ENCODE measurements at regions of chr10 and their contacts with region 1.

Region 1: DNA sequence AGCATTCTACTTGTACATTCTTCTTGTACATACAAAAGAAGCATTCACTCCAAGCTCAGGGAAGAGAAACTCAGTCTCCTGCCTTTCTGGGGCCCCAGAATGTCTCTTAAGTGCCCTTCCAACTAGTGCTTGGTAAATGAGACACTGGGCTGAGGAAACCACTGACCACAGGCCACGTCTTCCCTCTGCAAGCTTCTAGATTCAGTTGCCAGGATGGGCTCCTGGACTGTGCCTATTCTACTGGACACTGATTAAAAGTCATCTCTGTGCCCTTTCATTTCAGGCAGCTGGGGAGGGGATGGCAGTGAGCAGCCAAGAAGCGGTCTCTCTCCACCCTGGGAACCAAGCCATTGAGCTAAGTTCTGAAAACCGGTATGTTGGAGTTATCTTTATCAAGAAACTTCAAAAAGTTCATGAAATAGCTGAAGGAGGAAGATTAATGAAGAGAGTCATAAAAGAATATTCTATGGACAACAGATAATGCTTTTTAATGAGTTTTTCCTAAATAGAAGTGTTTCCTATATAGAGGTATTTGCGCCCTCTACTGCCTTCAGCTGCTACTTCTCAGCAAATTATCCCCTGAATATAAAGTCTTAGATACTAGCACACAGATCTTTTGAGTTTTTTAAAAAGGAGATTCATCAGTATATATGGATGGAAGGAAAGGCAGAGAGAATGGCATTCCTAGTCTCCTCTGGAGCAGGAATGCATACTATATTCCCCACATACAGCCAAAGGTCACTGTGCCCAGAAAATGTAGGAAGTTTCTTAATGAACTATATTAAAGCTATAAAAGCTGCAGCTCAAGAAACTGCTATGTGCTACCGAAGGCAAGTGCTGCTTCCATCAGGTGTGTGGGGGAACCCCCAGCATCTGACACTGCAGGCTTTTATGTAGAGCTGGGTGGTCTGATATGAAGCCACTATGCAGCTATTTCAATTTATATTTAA is 8.4 kb upstream of the IFIT1B start:
- DNase-seq: no peak
- ATAC-seq: no peak

Region 2: DNA sequence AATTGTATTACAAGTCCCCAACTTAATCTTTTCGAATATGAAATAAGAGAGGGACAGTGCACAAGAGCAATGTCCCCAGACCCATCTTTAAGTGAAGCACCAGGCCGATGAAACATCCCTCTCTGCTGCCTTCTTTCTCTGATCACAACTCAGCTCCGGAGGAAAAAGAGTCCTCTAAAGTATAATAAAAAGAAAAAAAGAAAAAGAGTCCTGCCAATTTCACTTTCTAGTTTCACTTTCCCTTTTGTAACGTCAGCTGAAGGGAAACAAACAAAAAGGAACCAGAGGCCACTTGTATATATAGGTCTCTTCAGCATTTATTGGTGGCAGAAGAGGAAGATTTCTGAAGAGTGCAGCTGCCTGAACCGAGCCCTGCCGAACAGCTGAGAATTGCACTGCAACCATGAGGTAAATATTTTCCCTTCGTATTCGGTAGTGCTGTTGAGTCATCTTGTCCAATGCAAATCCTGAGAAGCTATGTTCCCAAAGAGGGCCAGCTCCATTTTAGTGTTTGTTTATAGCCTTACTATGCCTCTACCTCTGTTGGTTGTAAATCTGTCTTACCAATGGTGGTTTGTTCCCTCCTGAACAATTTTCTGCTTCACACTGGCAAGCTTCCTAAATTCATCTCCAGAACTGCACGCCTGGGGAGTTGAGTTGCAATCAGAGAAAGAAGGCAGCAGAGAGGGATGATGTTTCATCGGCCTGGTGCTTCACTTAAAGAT is 67.5 kb before region 1 on chr10 and contains the start of gene IFIT2:
- intact Hi-C with region 1: loop called (anchors 5 kb)
- DNase-seq: no peak
- ATAC-seq: peak; percentile 70
- total RNA-seq, gene IFIT2: 4.2 TPM

Measured in Right ventricle myocardium inferior (tissue), 1 donor.